Posterior cingulate gyrus (tissue), 11 donors: ENCODE measurements at regions of chr11 and their contacts with region 1.

Region 1: GRCh38 chr11:73760679-73761402 is at the start of gene RAB6A:
- DNase-seq: peak; percentile 99 to 100 (median 100)

Region 2: GRCh38 chr11:73779084-73779902 is 18.5 kb after region 1 on chr11:
- intact Hi-C with region 1: loop called (anchors 1 kb)
- DNase-seq: peak; percentile 98 to 100 (median 99)

Region 3: DNA sequence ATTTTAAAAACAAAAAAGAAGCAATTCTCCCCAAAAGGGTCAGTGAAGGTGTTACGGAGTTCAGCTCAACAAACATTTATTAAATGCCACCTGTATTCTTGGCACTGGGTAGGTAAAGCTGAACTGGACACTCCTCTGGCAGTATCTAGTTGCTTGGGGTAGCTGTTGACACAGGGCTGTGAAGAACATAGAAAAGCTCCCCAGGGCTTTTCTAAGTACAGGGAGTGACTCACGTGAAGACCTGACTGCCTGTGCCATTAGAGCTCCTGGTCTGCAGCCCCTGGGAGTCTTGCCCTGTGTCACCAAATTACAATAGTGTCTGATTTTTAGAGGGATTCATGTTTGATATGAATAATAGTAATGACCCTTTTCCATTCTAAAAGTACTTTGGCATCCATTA is 72.2 kb after region 1 on chr11:
- intact Hi-C with region 1: no loop called
- DNase-seq: no peak

Region 4: DNA sequence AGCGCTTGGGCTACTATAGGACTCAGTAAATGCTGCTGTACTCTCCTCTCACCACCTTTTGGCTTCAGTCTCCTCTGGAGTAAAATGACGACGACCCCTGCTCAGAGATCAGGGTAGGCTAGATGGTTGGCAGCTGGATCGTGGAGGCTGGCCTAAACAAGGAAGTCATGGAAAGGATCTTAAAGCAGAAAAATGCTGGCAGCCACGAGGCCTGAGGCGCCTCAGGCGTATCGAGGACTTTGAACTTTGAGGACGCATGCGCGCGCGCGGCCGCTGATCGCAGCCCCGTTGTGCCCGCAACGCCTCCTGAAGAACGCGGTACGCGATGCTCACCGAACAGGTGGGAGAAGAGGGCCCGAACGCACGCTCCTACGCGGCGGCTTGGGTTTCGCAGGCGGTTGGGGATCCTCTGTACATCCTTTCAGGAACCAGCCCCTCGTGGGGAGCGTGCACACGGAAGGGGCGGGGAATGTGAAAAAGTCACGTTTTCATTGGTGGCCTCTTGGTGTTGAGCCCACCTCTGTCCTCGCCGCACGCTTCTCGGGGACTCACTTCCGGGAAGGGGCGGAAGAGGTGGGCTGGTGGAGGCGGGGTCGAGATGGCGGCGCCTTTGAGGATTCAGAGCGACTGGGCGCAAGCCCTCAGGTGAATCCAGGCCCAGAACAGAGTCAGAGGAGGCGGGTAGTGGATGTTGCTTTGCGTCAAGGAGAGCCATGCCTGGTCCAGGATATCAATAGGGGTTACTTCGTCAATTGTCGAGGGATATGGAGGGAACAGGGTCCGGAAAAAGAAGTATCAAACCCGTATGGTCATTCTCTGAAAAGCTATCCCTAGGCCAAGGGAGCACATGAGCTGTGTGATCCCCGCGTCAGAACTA is 115.8 kb after region 1 on chr11 and contains the starts of genes COA4 and PAAF1:
- intact Hi-C with region 1: loop called (anchors 5 kb)
- DNase-seq: peak; percentile 89 to 99 (median 95)

Region 5: GRCh38 chr11:73931039-73931645 is 170.3 kb after region 1 on chr11:
- intact Hi-C with region 1: loop called (anchors 5 kb)
- DNase-seq: peak in 3 of 10 donors; percentile 11 to 47 (median 11)